Esophagus muscularis mucosa (tissue), 4 donors: ENCODE measurements at regions of chr3 and their contacts with region 1.

Region 1: DNA sequence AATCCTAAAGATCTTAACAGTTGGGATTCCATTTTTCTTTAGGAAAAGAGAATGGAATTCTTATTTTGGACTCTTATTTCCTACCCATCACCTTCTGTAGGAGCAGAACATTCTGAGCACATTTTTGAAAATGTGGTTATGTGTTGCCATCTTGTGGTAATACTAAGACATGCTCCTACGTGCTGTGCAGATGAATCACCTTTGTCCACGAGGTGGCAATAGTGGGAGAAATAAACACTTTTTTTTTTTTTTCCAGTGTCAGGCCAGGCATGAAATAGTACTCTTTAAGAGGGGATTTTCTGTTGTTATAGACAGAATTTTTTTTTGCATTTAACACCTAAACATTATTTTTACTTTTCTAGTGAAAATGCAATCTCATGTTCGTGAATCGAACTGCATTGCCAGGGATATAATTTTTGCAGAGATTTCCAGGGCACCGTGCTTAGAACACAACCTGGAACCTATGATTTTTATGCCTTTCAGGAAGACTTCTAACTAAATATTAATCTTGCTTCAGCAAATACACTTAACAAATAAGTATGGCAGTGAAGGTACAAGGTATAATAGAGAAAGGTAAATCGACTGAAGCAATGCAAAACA is 196.6 kb downstream of the GAP43 start:
- DNase-seq: no peak
- H3K4me3 ChIP-seq: no peak overlapping the region
- H3K27ac ChIP-seq: no peak overlapping the region
- H3K4me1 ChIP-seq: no peaks in the 10 kb centered on the region
- H3K27me3 ChIP-seq: no peaks in the 10 kb centered on the region
- CTCF ChIP-seq: peak; percentile 95 to 96 (median 95)
- EP300 ChIP-seq: no peak
- POLR2A ChIP-seq: no peak

Region 2: GRCh38 chr3:115217678-115218451 is 602.0 kb before region 1 on chr3:
- intact Hi-C with region 1: loop called (anchors 10 kb)
- DNase-seq: no peak
- H3K4me3 ChIP-seq: no peak overlapping the region
- H3K27ac ChIP-seq: no peak overlapping the region
- H3K4me1 ChIP-seq: peaks cover 0 to 14% (median 12%) of the 10 kb centered on the region in 4 donors
- H3K27me3 ChIP-seq: no peaks in the 10 kb centered on the region
- CTCF ChIP-seq: peak; percentile 49 to 61 (median 51)
- EP300 ChIP-seq: no peak
- POLR2A ChIP-seq: no peak